Activated B cell treated with CpG ODN at 0.5 μM for 24 hours (primary cell): ENCODE measurements at regions of chr10 and their contacts with region 1.

Region 1: GRCh38 chr10:103396064-103396788 is at the starts of genes ATP5MK and PDCD11:
- DNase-seq: peak; percentile 88
- ATAC-seq: peak; percentile 98
- H3K4me3 Mint-ChIP-seq: peak within 1 kb of the TSS; percentile 98
- H3K27ac Mint-ChIP-seq: peak within 1 kb of the TSS; percentile 91
- H3K4me1 Mint-ChIP-seq: peaks cover 47% of the 10 kb centered on the region
- H3K27me3 Mint-ChIP-seq: no peaks in the 10 kb centered on the region
- CTCF ChIP-seq: no peak
- total RNA-seq, gene ATP5MK: 208 and 223 TPM in 2 replicates
- total RNA-seq, gene PDCD11: 65.4 and 66.0 TPM in 2 replicates

Region 2: DNA sequence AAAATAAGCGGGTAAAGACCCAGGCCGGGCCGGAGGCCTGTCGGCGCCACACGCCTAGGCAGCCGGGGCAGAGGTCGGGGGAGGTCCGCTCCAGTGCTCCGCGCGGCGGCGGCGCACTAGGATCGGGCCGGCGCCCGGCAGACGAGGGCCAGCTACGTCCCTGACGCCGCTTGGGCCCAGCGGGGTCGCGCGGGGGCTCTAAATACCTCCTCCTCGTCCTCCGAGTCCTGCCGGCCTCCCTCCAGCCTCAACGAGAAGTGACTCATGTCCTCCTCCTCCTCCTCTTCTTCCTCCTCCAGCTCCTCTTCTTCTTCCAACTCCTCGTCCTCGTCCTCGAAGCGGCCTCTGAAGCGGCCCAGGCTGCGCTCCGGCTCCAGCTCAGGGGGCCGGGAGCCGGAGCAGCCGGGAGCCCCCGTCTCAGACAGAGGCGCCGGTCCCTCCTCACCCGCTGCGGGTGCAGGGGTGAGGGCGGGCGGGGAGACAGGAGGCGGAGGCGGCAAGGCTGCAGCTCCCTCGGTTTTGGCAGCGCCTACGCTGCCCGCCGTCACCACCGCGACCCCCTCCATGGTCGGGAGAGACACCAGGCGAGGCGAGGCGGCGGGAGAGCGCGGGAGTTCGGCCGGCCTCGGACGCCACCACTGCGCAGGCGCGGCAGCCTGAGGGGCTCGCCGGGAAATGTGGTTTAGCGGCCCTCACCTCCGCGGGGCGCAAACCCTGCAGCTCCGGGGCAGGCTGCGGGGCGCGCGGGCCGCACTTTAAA is 45.5 kb before region 1 on chr10 and contains the start of gene PCGF6:
- CTCF ChIA-PET with region 1: no interaction called
- POLR2A ChIA-PET with region 1: interaction called, 14 read pairs
- intact Hi-C with region 1: loop called (anchors 1 kb)
- DNase-seq: peak; percentile 78
- ATAC-seq: peak; percentile 86
- H3K4me3 Mint-ChIP-seq: peak within 1 kb of the TSS; percentile 92
- H3K27ac Mint-ChIP-seq: peak within 1 kb of the TSS; percentile 82
- H3K4me1 Mint-ChIP-seq: peaks cover 10% of the 10 kb centered on the region
- H3K27me3 Mint-ChIP-seq: no peaks in the 10 kb centered on the region
- CTCF ChIP-seq: no peak
- total RNA-seq, gene PCGF6: 7.3 and 7.6 TPM in 2 replicates

Region 3: GRCh38 chr10:103382769-103383168 is 13.5 kb before region 1 on chr10:
- CTCF ChIA-PET with region 1: no interaction called
- POLR2A ChIA-PET with region 1: no interaction called
- intact Hi-C with region 1: no loop called
- DNase-seq: no peak
- ATAC-seq: peak; percentile 67
- H3K4me3 Mint-ChIP-seq: no peak overlapping the region
- H3K27ac Mint-ChIP-seq: no peak overlapping the region
- H3K4me1 Mint-ChIP-seq: peaks cover 4% of the 10 kb centered on the region
- H3K27me3 Mint-ChIP-seq: no peaks in the 10 kb centered on the region
- CTCF ChIP-seq: no peak